ENCODE measurements at regions of chr19 and their contacts with region 1.

Region 1: GRCh38 chr19:45455707-45456499 is 11.9 kb upstream of the FOSB start:
- DNase-seq: peak; percentile 73
- ATAC-seq: peak; percentile 40
- H3K4me3 Mint-ChIP-seq: no peak overlapping the region
- H3K27ac Mint-ChIP-seq: no peak overlapping the region
- H3K4me1 Mint-ChIP-seq: peaks cover 29% of the 10 kb centered on the region
- H3K27me3 Mint-ChIP-seq: peaks cover 9% of the 10 kb centered on the region

Region 2: DNA sequence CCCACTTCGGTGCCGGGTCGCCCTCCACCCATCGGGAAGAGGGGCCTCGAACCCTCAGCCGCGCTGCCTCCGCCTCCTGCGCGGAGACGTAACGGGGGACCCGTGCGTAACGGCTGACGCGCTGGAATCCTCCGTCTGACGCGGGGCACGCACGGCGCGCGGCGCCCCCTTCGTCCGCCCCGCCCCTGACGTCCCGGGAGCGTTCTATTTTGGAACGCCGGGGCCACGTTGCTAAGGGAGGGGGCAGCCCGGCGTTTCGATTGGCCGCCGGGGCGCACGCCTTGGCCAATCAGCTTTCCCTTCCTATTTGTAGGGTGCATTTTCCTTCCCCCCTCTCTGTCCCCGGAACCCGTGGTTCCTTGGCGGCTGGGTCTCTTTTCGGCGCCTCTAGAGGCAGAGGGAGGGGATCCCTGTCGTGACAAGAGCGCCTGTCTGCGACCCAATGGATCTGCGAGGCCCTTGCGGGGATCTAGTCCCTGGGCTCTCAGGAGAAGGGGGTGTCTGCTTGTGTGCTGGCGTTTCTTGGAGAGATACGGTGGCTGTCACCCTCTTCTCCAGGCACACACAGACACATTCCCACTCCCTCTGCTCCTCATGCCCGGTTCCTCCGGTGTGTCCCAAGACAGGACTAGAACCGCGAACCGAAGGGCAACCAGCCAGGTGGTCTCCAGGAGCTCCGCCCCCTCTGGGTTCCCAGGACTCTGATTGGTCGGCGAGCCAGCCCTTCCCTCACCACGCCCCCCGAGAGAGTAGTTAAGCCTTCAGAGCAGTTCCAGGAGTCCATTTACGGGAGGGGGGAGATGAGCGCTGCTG is 13.4 kb after region 1 on chr19:
- CTCF ChIA-PET with region 1: interaction called, 12 read pairs
- DNase-seq: peak; percentile 96
- ATAC-seq: peak; percentile 32
- H3K4me3 Mint-ChIP-seq: peak overlapping the region; percentile 86
- H3K27ac Mint-ChIP-seq: peak overlapping the region; percentile 96
- H3K4me1 Mint-ChIP-seq: peaks cover 24% of the 10 kb centered on the region
- H3K27me3 Mint-ChIP-seq: peaks cover 26% of the 10 kb centered on the region

Region 3: GRCh38 chr19:45558399-45558878 is 102.5 kb after region 1 on chr19:
- CTCF ChIA-PET with region 1: no interaction called
- DNase-seq: peak; percentile 81
- ATAC-seq: peak; percentile 97
- H3K4me3 Mint-ChIP-seq: no peak overlapping the region
- H3K27ac Mint-ChIP-seq: no peak overlapping the region
- H3K4me1 Mint-ChIP-seq: peaks cover 15% of the 10 kb centered on the region
- H3K27me3 Mint-ChIP-seq: no peaks in the 10 kb centered on the region